ENCODE measurements at regions of chr14 and their contacts with region 1.

Region 1: DNA sequence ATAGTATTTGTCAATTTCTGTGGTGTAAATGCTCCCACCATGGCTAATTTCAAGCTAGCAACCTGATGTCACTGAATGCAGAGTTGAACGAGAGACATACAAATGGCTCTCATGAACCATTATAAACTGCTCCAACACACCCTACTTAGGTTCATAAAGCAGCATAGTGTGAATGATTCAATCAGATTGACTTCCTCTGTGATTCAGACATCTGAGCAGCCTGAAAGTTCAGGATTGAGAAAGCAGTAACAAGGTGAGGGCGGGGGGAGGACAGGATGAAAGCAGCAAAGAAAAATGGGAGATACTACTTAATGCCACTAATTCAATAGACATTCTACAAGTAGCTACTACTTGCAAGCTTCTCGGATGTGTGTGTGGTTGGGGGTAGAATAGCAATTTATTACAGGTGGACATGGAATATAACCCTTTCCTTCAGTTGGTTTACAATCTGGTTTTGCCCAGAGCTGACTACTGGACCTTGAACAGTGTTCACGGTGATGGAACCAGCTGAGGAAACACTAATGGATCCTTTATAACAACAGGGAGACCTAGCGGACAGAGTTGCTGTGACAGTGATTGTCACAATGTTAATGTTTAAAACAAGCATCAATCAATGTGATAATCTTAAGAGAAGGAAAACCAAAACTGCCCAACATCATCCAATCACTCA is 52.5 kb upstream of the PELI2 start:
- DNase-seq: no peak
- ATAC-seq: no peak
- H3K4me3 ChIP-seq: no peak overlapping the region
- H3K4me3 Mint-ChIP-seq: no peak overlapping the region
- H3K27ac ChIP-seq: no peak overlapping the region
- H3K27ac Mint-ChIP-seq: no peak overlapping the region
- H3K4me1 ChIP-seq: no peaks in the 10 kb centered on the region
- H3K4me1 Mint-ChIP-seq: no peaks in the 10 kb centered on the region
- H3K27me3 ChIP-seq: no peaks in the 10 kb centered on the region
- H3K27me3 Mint-ChIP-seq: peaks cover 15% of the 10 kb centered on the region
- CTCF ChIP-seq: no peak

Region 2: DNA sequence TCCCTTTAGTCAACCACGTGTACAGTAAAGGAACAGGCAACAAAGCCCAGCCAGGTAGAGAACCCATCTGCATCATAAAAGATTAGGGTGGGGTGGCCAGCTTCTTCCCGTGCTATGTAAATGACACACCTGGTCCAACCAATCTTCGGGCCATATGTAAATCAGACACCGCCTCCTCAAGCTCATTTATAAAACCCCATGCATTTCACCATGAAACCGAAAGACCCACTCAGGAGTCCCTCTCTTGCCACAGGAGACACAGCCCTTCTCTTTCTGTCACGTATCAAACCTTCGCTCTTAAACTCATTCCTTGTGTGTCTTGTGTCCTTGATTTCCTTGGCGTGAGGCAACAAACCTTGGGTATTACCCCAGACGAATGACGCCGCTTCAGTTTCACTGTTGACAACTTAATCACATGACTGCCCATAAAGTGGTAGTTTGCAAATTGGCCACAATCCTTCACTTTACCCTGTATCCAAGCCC is 565.5 kb before region 1 on chr14:
- CTCF ChIA-PET with region 1: no interaction called
- POLR2A ChIA-PET with region 1: no interaction called
- intact Hi-C with region 1: no loop called
- DNase-seq: no peak
- ATAC-seq: no peak
- H3K4me3 ChIP-seq: no peak overlapping the region
- H3K4me3 Mint-ChIP-seq: no peak overlapping the region
- H3K27ac ChIP-seq: no peak overlapping the region
- H3K27ac Mint-ChIP-seq: no peak overlapping the region
- H3K4me1 ChIP-seq: no peaks in the 10 kb centered on the region
- H3K4me1 Mint-ChIP-seq: no peaks in the 10 kb centered on the region
- H3K27me3 ChIP-seq: peaks cover 2 to 3% of the 10 kb centered on the region in 2 experiments
- H3K27me3 Mint-ChIP-seq: peaks cover 34% of the 10 kb centered on the region
- CTCF ChIP-seq: no peak

Region 3: GRCh38 chr14:56271970-56272369 is 206.2 kb after region 1 on chr14:
- CTCF ChIA-PET with region 1: no interaction called
- POLR2A ChIA-PET with region 1: no interaction called
- intact Hi-C with region 1: loop called in 1 of 2 experiments (anchors 10 kb)
- DNase-seq: no peak
- ATAC-seq: no peak
- H3K4me3 ChIP-seq: no peak overlapping the region
- H3K4me3 Mint-ChIP-seq: no peak overlapping the region
- H3K27ac ChIP-seq: no peak overlapping the region
- H3K27ac Mint-ChIP-seq: no peak overlapping the region
- H3K4me1 ChIP-seq: no peaks in the 10 kb centered on the region
- H3K4me1 Mint-ChIP-seq: no peaks in the 10 kb centered on the region
- H3K27me3 ChIP-seq: no peaks in the 10 kb centered on the region
- H3K27me3 Mint-ChIP-seq: no peaks in the 10 kb centered on the region
- CTCF ChIP-seq: no peak